Psoas muscle (tissue), 8 donors: ENCODE measurements at regions of chr22 and their contacts with region 1.

Region 1: GRCh38 chr22:35914665-35915476 is 113.8 kb downstream of the RBFOX2 start:
- DNase-seq: peak in 1 of 2 donors; percentile 55
- ATAC-seq: peak; percentile 87 to 93 (median 90)
- H3K4me3 ChIP-seq: peak overlapping the region; percentile 68
- H3K27ac ChIP-seq: peak overlapping the region; percentile 90
- H3K4me1 ChIP-seq: peaks cover 82% of the 10 kb centered on the region
- H3K27me3 ChIP-seq: no peaks in the 10 kb centered on the region
- CTCF ChIP-seq: no peak

Region 2: DNA sequence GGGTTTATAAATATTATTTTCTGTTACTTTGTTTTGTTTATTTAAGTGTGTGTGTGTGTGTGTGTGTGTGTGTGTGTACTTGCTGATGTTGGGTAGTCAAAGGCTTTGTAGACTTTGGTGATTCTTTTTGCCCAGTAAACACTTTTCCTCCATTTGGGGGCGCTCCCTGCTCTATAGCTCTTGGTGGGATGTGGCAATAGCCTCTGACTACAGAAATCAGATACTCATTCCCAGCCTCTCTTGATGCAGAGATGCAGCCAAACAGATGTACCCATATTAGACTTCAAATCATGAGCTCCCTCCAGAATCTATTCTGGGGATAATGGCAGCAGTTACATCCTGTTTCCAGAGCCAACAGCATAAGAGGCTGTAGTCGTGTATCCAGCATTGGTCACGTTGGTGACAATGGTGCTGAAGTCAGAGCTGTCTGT is 230.6 kb before region 1 on chr22:
- intact Hi-C with region 1: loop called (anchors 2 to 10 kb)
- DNase-seq: no peak
- ATAC-seq: peak; percentile 91 to 98 (median 96)
- H3K4me3 ChIP-seq: no peak overlapping the region
- H3K27ac ChIP-seq: peak overlapping the region; percentile 92
- H3K4me1 ChIP-seq: peaks cover 19% of the 10 kb centered on the region
- H3K27me3 ChIP-seq: no peaks in the 10 kb centered on the region
- CTCF ChIP-seq: peak; percentile 31

Region 3: GRCh38 chr22:35761037-35761436 is 153.8 kb before region 1 on chr22:
- intact Hi-C with region 1: loop called (anchors 5 kb)
- DNase-seq: no peak
- ATAC-seq: peak in 2 of 4 donors; percentile 80 to 81
- H3K4me3 ChIP-seq: no peak overlapping the region
- H3K27ac ChIP-seq: no peak overlapping the region
- H3K4me1 ChIP-seq: peaks cover 7% of the 10 kb centered on the region
- H3K27me3 ChIP-seq: no peaks in the 10 kb centered on the region
- CTCF ChIP-seq: peak; percentile 32

Region 4: DNA sequence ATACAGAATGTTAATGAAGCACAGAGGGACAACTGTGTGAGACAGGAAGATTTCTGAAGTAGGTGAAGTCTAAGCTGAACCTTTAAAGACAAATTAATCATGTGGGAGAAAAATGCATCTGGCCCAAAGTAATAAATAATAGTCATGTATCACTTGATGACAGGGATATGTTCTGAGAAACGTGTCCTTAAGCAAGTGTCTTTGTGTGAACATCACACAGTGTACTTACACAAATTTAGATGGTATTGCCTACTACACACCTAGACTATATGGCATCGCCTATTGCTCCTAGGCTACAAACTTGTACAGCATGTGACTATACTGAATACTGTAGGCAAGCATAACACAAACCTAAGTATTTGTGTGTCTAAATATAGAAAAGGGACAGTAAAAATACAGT is 84.6 kb before region 1 on chr22:
- intact Hi-C with region 1: no loop called
- DNase-seq: no peak
- ATAC-seq: peak in 3 of 4 donors; percentile 64 to 72 (median 72)
- H3K4me3 ChIP-seq: no peak overlapping the region
- H3K27ac ChIP-seq: no peak overlapping the region
- H3K4me1 ChIP-seq: peaks cover 70% of the 10 kb centered on the region
- H3K27me3 ChIP-seq: no peaks in the 10 kb centered on the region
- CTCF ChIP-seq: no peak

Region 5: GRCh38 chr22:35840302-35840739 is 74.5 kb before region 1 on chr22:
- intact Hi-C with region 1: loop called (anchors 5 kb)
- DNase-seq: peak; percentile 87 to 92
- ATAC-seq: peak; percentile 86 to 91 (median 90)
- H3K4me3 ChIP-seq: peak overlapping the region; percentile 67
- H3K27ac ChIP-seq: peak overlapping the region; percentile 85
- H3K4me1 ChIP-seq: peaks cover 73% of the 10 kb centered on the region
- H3K27me3 ChIP-seq: no peaks in the 10 kb centered on the region
- CTCF ChIP-seq: no peak

Region 6: GRCh38 chr22:35868938-35869337 is 45.9 kb before region 1 on chr22:
- intact Hi-C with region 1: no loop called
- DNase-seq: no peak
- ATAC-seq: no peak
- H3K4me3 ChIP-seq: no peak overlapping the region
- H3K27ac ChIP-seq: peak overlapping the region; percentile 88
- H3K4me1 ChIP-seq: peaks cover 70% of the 10 kb centered on the region
- H3K27me3 ChIP-seq: no peaks in the 10 kb centered on the region
- CTCF ChIP-seq: no peak